ENCODE measurements at regions of chr6 and their contacts with region 1.

Region 1: DNA sequence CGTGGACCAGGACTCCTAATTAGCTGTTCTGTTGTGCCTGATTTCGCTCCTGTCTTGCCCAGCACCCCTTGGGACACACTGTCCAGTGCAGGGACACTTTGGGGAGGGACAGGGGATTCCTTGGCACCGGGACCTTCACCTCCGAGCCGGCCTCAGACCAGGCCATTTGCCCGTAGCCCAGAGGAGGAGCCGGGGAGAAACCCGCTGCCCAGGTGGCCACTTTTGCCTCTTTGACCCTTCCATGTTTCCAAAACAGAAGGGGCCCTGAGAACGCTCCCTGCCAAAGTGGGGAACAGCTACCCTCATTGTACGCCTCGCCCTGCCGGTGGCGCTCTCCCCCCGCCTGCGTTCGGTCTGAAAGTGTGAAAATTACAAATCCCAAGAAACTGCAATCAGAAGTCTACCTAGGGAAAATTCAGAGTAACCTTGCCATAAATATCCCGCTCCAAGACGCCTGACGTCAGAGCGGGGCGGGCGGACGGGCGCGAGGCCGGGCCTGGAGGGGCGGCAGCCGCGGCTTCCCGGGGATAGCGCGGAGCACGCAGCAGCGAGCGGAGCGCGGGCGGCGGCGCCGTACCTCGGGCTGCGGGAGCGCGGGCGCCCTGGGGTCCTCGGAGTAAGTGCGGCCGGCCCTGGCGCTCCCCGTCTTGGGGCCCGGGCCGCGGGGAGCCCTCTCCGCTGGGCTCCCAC is at the start of gene DAAM2:
- DNase-seq: peak; percentile 47 to 54
- ATAC-seq: peak; percentile 72 to 82
- H3K4me3 ChIP-seq: peak within 1 kb of the TSS; percentile 65 to 88 (median 67)
- H3K27ac ChIP-seq: peak within 1 kb of the TSS; percentile 74 to 87 (median 79)
- H3K4me1 ChIP-seq: peaks cover 18 to 19% of the 10 kb centered on the region in 2 donors
- H3K27me3 ChIP-seq: no peaks in the 10 kb centered on the region
- CTCF ChIP-seq: peak in 4 of 5 experiments; percentile 13 to 51 (median 25)
- POLR2A ChIP-seq: peak; percentile 74 to 89
- total RNA-seq, gene DAAM2: 25.9 to 84.0 (median 48.5) TPM

Region 2: DNA sequence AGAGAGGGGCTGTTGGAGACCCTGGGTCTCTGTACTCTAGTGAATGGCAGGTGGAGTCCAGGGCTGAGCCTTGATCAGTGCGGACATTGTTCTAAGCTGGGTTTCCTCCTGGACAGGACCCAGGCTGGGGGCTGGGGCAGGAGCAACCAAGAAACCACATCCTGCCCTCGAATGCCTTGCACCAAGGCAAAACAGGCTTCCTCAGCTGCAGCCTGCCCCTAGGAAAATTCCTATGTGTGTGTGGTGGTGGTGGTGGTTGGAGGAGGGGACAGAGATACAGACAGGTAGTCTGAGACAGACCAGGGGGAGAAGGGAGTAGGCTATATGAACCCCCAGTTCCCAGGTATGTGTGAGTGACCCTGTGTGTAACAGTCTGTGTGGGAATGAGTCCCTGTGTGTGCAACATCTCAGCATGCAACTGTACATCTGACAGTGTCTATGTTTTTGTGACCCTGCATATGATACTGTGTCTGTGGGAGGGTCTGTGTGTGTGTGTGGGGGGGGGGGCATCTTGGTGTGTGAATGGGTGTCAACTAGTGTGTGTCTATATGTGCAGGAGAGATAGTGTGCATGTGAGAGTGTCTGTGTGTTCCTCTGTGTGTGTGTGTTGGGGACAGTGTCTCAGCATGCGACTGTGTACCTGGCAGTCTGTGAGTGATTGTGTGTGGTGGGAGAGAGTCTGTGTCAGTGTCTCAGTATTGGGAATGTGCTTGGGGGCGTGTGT is 740.4 kb before region 1 on chr6:
- in situ Hi-C with region 1: no loop called
- intact Hi-C with region 1: no loop called
- DNase-seq: no peak
- ATAC-seq: no peak
- H3K4me3 ChIP-seq: no peak overlapping the region
- H3K27ac ChIP-seq: no peak overlapping the region
- H3K4me1 ChIP-seq: no peaks in the 10 kb centered on the region
- H3K27me3 ChIP-seq: peaks cover 21 to 34% (median 22%) of the 10 kb centered on the region in 3 donors
- CTCF ChIP-seq: no peak
- POLR2A ChIP-seq: no peak

Region 3: DNA sequence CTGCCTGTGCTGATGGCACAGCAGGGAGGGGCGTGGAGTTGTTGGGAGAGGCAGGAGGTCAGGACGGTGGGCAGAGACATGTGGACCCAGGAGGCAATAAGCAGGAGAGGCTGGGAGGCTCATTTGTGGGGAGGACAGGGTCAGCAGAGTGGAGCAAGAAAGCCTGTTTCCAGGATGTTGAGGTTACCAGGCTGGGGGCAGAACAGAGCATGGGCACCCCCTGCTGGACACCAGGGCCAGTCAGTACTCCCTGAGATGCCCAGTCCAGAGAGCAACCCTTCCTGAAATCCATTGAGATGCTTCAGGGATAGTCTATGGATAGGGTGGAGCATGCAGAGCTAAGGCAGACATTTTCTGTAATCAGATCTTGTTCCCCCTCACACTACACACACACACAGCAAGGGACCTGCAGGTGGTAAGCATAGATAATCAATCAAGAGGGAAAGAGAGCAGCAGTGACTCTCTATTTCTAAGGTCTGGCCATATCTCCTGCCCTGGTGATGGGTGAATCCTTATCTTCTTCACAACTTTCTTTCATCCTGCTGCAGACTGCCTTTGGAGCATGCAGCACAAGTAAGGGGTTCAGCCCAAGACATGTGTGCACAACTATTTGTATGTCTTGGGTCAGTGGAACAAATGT is 100.6 kb after region 1 on chr6:
- in situ Hi-C with region 1: no loop called
- intact Hi-C with region 1: loop called (anchors 5 kb)
- DNase-seq: peak in 1 of 2 donors; percentile 47
- ATAC-seq: peak in 1 of 2 donors; percentile 61
- H3K4me3 ChIP-seq: no peak overlapping the region
- H3K27ac ChIP-seq: peak overlapping the region in 1 of 4 donors; percentile 3
- H3K4me1 ChIP-seq: peaks cover 10 to 11% of the 10 kb centered on the region in 2 donors
- H3K27me3 ChIP-seq: no peaks in the 10 kb centered on the region
- CTCF ChIP-seq: peak; percentile 39 to 68 (median 64)
- POLR2A ChIP-seq: no peak